Breast epithelium (tissue), 4 donors: ENCODE measurements at regions of chr1 and their contacts with region 1.

Region 1: DNA sequence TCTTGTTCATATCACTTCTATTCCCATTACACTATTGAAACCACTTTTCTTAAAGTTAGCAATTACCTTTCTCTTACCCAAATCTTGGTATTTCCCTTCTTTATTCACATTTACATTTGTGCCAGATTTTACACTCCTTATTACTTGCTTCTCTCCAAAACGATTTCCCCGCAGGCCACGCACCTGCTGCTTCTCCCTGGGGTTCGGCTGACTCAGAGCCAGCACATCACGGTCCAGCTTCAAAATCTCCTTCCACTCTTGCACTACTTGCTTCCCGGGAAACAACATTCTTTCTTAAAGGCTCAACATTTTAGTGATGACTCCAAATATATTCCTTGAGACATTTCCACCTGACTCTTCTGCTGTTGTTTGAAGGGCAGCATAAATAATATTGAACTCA is 20.7 kb downstream of the LHX9 start:
- DNase-seq: no peak
- H3K4me3 ChIP-seq: no peak overlapping the region
- H3K27ac ChIP-seq: no peak overlapping the region
- H3K4me1 ChIP-seq: no peaks in the 10 kb centered on the region
- H3K27me3 ChIP-seq: peaks cover 0 to 22% of the 10 kb centered on the region in 2 donors
- CTCF ChIP-seq: no peak
- POLR2A ChIP-seq: no peak

Region 2: DNA sequence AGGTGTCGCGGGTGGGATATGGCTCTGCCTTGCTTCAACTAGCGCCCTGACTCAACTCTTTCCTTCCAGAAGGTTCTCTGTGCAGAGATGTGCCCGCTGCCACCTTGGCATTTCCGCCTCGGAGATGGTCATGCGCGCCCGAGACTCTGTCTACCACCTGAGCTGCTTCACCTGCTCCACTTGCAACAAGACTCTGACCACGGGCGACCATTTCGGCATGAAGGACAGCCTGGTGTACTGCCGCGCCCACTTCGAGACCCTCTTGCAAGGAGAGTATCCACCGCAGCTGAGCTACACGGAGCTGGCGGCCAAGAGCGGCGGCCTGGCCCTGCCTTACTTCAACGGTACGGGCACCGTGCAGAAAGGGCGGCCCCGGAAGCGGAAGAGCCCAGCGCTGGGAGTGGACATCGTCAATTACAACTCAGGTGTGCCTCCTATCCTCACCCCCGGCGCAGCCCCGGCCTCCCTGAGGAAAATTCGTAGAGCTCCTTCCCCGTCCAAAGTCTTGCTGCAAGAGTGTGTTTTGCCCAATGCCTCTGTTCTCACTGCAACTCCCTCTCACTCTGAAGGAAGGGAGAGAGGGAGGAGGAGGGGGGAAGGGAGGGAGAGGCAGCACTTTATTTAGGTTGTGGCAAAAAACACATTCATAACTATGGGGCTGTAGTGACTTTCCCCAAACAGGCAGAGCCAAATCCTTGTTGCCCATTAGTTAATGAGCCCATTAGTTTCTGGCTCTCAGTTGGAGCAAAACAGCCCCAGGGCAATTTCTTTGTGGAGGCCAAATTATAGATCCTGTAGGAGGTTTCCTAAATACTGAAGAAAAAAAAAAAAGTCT is 16.4 kb before region 1 on chr1:
- intact Hi-C with region 1: loop called (anchors 1 kb)
- DNase-seq: no peak
- H3K4me3 ChIP-seq: no peak overlapping the region
- H3K27ac ChIP-seq: no peak overlapping the region
- H3K4me1 ChIP-seq: peaks cover 9 to 16% of the 10 kb centered on the region in 2 donors
- H3K27me3 ChIP-seq: peaks cover 7 to 63% of the 10 kb centered on the region in 2 donors
- CTCF ChIP-seq: no peak
- POLR2A ChIP-seq: no peak